ENCODE measurements at regions of chr3 and their contacts with region 1.

Region 1: DNA sequence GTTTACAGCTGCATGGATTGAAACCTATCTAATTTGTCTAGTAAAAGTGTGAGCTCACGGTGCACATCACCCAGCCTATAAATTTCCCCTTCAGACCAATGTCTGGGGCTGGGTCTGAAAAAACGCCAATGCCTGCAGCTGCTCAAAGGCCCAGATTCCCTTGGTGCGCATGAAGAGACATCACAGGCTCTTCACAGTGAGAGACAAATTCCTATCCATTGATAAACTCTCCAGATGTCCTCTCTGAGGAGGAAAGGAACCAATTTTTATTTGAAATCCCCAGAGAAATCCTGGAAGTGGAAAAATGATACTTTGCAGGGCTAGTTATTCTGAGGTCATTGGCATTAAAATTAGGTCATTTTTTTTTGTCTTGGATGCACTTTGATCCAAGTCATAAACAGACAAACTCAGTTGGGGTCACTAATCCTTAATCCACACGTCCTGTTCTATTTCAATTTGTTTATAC is 360.5 kb downstream of the EPHA3 start:
- DNase-seq: peak in 1 of 2 donors; percentile 27
- ATAC-seq: peak in 6 of 8 donors; percentile 61 to 90 (median 80)
- H3K4me3 ChIP-seq: no peak overlapping the region
- H3K27ac ChIP-seq: peak overlapping the region in 2 of 10 donors; percentile 19
- H3K4me1 ChIP-seq: peaks cover 0 to 5% (median 0%) of the 10 kb centered on the region in 9 donors
- H3K27me3 ChIP-seq: no peaks in the 10 kb centered on the region
- CTCF ChIP-seq: no peak

Region 2: GRCh38 chr3:89320186-89320585 is 147.7 kb before region 1 on chr3:
- intact Hi-C with region 1: no loop called
- DNase-seq: no peak
- ATAC-seq: no peak
- H3K4me3 ChIP-seq: no peak overlapping the region
- H3K27ac ChIP-seq: no peak overlapping the region
- H3K4me1 ChIP-seq: no peaks in the 10 kb centered on the region
- H3K27me3 ChIP-seq: no peaks in the 10 kb centered on the region
- CTCF ChIP-seq: no peak

Region 3: GRCh38 chr3:89419647-89420241 is 48.2 kb before region 1 on chr3:
- intact Hi-C with region 1: no loop called
- DNase-seq: peak in 1 of 2 donors; percentile 67
- ATAC-seq: peak; percentile 44 to 95 (median 76)
- H3K4me3 ChIP-seq: no peak overlapping the region
- H3K27ac ChIP-seq: peak overlapping the region in 5 of 10 donors; percentile 12 to 56 (median 32)
- H3K4me1 ChIP-seq: peaks cover 0 to 36% (median 0%) of the 10 kb centered on the region in 9 donors
- H3K27me3 ChIP-seq: no peaks in the 10 kb centered on the region
- CTCF ChIP-seq: no peak

Region 4: DNA sequence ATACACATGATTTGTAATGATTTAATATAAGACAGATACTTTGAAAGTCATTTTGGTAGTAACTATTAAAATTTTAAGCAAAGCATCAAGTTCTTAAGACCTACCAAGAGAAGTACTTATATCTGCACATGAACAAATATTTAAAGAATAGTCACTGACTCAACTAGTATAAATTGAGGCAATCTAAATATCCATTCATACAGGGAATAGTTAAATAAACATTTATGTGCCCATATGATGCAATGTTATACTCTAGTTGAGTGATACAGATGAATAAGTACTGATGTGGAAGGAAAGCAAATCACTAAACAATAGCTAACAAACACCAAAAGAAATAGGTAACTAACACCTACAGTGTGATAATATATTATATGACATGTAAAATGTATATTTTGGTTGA is 167.2 kb after region 1 on chr3:
- intact Hi-C with region 1: loop called in 1 of 10 experiments (anchors 5 kb)
- DNase-seq: no peak
- ATAC-seq: no peak
- H3K4me3 ChIP-seq: no peak overlapping the region
- H3K27ac ChIP-seq: no peak overlapping the region
- H3K4me1 ChIP-seq: no peaks in the 10 kb centered on the region
- H3K27me3 ChIP-seq: no peaks in the 10 kb centered on the region
- CTCF ChIP-seq: no peak

Measured in heart right ventricle (tissue), 16 donors.